Activated CD8-positive, alpha-beta T cell treated with anti-CD3 and anti-CD28 coated beads for 36 hours (primary cell): ENCODE measurements at regions of chr5 and their contacts with region 1.

Region 1: DNA sequence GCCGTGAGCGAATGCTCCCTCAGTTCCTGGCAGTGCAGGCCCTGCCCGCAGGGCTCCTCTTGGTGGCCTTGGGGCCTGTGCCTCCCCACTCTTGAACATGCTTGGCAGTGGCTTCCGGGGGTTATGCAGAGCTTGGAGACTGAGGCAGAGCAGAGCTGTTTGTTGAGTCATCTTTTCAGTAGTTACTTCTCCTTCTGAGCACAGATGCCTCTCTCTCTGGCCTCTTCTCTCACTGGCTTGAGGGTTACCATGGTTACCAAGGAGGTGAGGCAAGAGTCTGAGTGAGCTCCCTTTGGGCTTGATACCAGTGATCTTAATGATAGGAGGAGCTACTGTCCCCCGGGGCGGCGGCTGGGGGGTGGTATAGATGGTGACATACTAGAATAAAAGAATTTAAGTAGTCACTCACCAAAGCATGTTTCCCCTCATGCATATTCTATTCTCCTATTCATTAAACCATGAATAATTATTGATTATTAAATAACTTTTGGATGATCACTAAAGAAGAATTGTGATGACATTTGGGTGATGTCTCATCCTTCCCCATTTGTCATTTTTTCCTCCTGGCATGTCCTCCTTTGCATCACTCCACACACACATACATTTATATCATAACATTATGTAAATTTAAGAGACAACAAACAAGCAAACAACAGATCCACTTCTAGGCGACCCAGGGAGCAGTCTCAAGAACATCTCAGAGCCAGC is 111.1 kb downstream of the ARHGAP26 start:
- DNase-seq: no peak
- ATAC-seq: peak; percentile 37
- H3K4me3 Mint-ChIP-seq: no peak overlapping the region
- H3K27ac Mint-ChIP-seq: no peak overlapping the region
- H3K4me1 Mint-ChIP-seq: peaks cover 8% of the 10 kb centered on the region
- H3K27me3 Mint-ChIP-seq: no peaks in the 10 kb centered on the region
- CTCF ChIP-seq: no peak

Region 2: DNA sequence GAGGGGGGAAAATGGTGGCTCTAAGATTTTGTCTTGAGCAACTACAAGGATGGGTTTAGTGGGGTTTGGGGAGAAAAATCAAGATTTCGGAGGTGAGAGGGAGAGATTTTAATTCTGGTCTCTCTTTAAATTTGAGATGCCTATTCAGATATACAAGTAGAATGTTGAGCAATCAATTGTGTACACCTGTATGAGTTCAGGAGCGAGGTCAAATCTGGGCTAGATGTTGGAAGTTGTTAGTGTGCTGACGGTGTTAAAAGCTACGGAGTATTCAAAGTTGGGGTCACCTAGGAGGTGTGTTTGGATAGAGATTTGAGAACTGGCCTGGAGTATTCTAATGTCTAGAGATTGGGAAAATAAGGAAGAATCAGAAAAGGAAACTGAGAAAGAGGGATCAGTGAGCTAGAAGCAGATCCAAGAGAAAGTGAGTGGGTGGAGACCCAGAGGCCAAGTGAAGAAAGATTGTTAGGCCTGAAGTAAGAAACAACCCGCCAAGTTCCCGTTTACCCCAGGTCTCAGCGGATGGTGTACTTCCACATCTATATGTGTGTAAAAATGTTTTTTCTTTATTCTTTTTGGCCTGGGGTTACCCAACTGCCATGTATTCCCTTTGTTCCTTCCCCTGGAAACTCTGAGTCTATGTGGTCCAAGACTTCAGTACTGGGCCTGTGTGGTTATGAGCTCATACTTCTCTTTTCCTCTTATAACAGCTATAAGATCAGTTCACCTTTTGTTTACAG is 123.0 kb before region 1 on chr5:
- CTCF ChIA-PET with region 1: interaction called, 1,012 read pairs
- POLR2A ChIA-PET with region 1: interaction called, 3 read pairs
- intact Hi-C with region 1: no loop called
- DNase-seq: no peak
- ATAC-seq: peak; percentile 71
- H3K4me3 Mint-ChIP-seq: no peak overlapping the region
- H3K27ac Mint-ChIP-seq: no peak overlapping the region
- H3K4me1 Mint-ChIP-seq: peaks cover 16% of the 10 kb centered on the region
- H3K27me3 Mint-ChIP-seq: no peaks in the 10 kb centered on the region
- CTCF ChIP-seq: no peak

Region 3: DNA sequence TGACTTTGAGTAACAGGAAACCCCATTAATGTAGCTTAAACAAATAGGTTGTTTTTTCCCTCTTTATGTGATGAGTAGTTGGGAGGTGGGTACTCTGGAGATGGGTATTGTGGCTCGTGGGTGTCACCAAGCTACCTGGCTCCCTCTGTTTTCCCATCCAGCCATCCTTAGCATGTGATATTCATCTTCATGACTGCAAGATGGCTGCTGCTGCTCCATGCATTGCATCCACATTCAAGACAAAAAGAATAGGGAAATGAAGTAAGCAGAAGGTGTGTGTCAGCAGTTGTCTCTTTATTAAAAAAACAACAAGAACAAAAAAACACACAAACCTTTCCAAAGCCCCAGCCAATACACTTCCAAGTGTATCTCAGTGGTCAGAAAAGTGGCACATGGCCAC is 117.5 kb before region 1 on chr5:
- CTCF ChIA-PET with region 1: interaction called, 1,012 read pairs
- POLR2A ChIA-PET with region 1: interaction called, 3 read pairs
- intact Hi-C with region 1: no loop called
- DNase-seq: no peak
- ATAC-seq: no peak
- H3K4me3 Mint-ChIP-seq: no peak overlapping the region
- H3K27ac Mint-ChIP-seq: no peak overlapping the region
- H3K4me1 Mint-ChIP-seq: peaks cover 1% of the 10 kb centered on the region
- H3K27me3 Mint-ChIP-seq: no peaks in the 10 kb centered on the region
- CTCF ChIP-seq: no peak

Region 4: DNA sequence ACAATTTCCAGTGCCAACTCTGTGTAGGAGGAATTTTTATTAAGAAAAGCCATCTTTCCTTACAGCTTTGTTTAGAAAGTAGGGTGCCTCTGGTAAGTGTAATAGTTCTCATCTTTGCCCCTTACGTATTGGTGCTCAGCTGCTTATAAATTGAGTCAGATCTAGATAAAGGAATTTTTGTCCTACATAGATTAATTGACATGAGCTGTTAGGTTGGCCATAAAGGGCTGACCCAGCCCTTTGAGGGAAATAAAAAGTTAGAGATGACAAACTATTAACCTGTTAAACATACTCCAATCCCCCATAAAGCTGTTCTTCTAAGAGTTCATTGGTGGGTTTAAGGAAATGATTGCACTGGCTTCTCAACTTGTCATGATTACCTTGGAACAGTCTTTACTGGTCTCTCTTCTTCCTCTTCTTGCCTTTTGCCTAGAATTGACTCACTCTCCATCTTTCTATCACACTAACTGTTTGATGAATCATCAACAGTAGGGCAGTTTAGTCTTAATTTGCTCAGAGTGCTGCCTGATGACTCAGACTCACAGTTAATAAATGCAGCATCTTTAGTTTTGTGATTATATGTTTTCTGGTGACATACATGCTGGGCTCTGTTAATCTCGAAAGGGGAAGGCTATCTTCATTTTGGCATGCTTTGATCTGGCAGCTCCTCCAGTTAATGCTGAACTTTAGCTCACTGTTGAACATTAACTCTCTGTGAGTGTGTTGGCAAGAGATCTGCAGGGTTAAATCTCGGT is 59.3 kb before region 1 on chr5:
- CTCF ChIA-PET with region 1: interaction called, 13 read pairs
- POLR2A ChIA-PET with region 1: no interaction called
- intact Hi-C with region 1: no loop called
- DNase-seq: peak; percentile 37
- ATAC-seq: peak; percentile 93
- H3K4me3 Mint-ChIP-seq: no peak overlapping the region
- H3K27ac Mint-ChIP-seq: peak overlapping the region; percentile 70
- H3K4me1 Mint-ChIP-seq: peaks cover 81% of the 10 kb centered on the region
- H3K27me3 Mint-ChIP-seq: no peaks in the 10 kb centered on the region
- CTCF ChIP-seq: no peak

Region 5: DNA sequence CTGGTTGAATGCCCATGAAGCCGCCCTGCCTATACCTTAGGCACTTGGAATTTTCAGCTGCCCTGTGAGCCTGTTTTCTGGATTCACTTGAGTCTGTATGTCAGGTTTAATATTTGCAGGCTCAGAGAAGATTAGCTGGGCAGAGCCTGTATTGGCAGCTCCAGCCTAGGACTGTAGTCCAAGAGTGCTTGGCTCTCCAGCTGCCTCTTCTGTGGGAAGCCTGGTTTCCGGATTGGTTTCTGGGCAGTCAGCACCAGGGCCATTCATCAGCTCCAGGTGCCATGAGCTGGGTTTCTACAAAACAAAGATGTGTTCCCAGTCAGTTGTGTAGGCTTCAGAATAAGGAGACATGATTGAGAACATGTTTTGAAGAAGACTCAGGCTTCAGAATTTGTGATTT is 21.0 kb before region 1 on chr5:
- CTCF ChIA-PET with region 1: interaction called, 20 read pairs
- POLR2A ChIA-PET with region 1: no interaction called
- intact Hi-C with region 1: no loop called
- DNase-seq: no peak
- ATAC-seq: no peak
- H3K4me3 Mint-ChIP-seq: no peak overlapping the region
- H3K27ac Mint-ChIP-seq: no peak overlapping the region
- H3K4me1 Mint-ChIP-seq: peaks cover 53% of the 10 kb centered on the region
- H3K27me3 Mint-ChIP-seq: no peaks in the 10 kb centered on the region
- CTCF ChIP-seq: no peak

Region 6: DNA sequence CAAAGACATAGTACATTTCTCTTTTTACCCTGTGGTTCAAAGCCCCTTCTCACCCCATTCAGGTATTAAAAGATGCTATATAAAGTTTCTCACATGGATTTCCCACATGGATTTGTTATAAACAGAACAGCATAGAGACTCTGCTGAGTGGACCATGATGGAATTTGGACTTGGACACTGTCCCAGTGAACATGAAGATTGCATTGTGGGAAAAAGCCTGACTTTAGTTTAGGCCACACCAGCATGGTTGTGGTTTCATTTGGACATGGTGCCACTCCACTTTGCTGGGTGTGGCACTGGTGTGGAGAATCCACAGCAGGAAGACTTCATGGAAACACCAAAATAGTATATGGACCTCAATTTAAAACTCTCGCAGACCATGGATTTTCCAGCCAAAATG is 13.5 kb after region 1 on chr5:
- CTCF ChIA-PET with region 1: interaction called, 21 read pairs
- POLR2A ChIA-PET with region 1: no interaction called
- intact Hi-C with region 1: no loop called
- DNase-seq: no peak
- ATAC-seq: no peak
- H3K4me3 Mint-ChIP-seq: no peak overlapping the region
- H3K27ac Mint-ChIP-seq: no peak overlapping the region
- H3K4me1 Mint-ChIP-seq: peaks cover 2% of the 10 kb centered on the region
- H3K27me3 Mint-ChIP-seq: no peaks in the 10 kb centered on the region
- CTCF ChIP-seq: no peak

Region 7: GRCh38 chr5:143017541-143017940 is 136.3 kb after region 1 on chr5:
- CTCF ChIA-PET with region 1: no interaction called
- POLR2A ChIA-PET with region 1: no interaction called
- intact Hi-C with region 1: no loop called
- DNase-seq: no peak
- ATAC-seq: no peak
- H3K4me3 Mint-ChIP-seq: no peak overlapping the region
- H3K27ac Mint-ChIP-seq: no peak overlapping the region
- H3K4me1 Mint-ChIP-seq: peaks cover 43% of the 10 kb centered on the region
- H3K27me3 Mint-ChIP-seq: no peaks in the 10 kb centered on the region
- CTCF ChIP-seq: no peak

Region 8: GRCh38 chr5:143213851-143214363 is 332.7 kb after region 1 on chr5:
- CTCF ChIA-PET with region 1: no interaction called
- POLR2A ChIA-PET with region 1: no interaction called
- intact Hi-C with region 1: no loop called
- DNase-seq: peak; percentile 29
- ATAC-seq: peak; percentile 45
- H3K4me3 Mint-ChIP-seq: no peak overlapping the region
- H3K27ac Mint-ChIP-seq: peak overlapping the region; percentile 70
- H3K4me1 Mint-ChIP-seq: peaks cover 29% of the 10 kb centered on the region
- H3K27me3 Mint-ChIP-seq: no peaks in the 10 kb centered on the region
- CTCF ChIP-seq: no peak